Activated CD4-positive, alpha-beta memory T cell treated with anti-CD3 and anti-CD28 coated beads for 36 hours (primary cell): ENCODE measurements at regions of chrX and their contacts with region 1.

Region 1: DNA sequence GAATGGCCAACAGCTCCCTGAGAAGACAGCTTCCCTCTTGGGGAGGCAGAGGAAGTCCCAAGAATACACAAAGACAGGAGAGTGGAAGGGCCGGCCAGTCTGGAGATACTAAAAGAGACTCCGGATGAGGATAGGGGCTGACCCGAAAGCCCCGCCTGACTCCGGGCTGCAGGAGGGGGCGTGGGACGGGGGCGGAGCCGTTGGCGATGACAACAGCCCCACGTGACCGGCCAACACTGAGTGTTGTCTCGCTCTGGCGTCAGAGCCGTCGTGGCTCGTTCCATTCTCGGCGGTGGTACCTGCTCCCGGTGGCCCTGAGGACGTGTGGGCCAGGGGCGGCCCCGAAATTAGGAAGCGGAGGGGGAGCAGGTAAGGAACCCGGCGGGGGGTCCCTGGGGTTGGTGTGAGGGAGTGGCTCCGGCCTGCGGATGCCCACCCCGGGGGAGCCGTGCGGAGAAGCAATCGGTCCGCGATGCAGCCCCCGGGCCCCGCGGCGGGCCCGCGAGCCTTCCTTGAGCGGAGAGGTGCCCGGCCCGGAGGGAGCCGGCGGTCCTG is at the start of gene BEX4:
- DNase-seq: peak; percentile 89
- H3K4me3 Mint-ChIP-seq: peak within 1 kb of the TSS; percentile 77
- H3K27ac Mint-ChIP-seq: peak within 1 kb of the TSS; percentile 65
- H3K4me1 Mint-ChIP-seq: peaks cover 4% of the 10 kb centered on the region
- H3K27me3 Mint-ChIP-seq: no peaks in the 10 kb centered on the region
- total RNA-seq, gene BEX4: 8.0 to 11.5 TPM

Region 2: DNA sequence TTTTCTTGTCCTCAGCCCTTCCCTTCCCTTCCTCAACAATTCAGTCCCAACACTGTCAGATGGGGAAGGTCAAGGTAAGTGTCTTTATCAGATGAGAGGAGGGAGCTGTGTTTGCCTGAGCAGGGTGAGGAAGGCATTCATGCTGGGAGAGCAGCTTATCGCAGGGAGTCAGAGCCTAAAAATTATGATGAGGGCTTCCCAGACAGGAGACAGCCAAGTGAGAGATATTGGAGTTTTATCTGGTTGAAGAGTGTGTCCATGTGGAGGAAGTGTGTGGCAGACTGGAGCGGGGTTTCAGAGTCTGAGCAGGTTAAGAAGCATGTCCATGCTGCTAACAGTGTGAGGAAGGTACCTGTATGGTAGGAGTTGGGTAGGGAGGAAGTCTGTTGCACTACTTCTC is 18.3 kb after region 1 on chrX:
- CTCF ChIA-PET with region 1: interaction called, 10 read pairs
- POLR2A ChIA-PET with region 1: no interaction called
- intact Hi-C with region 1: no loop called
- DNase-seq: no peak
- H3K4me3 Mint-ChIP-seq: no peak overlapping the region
- H3K27ac Mint-ChIP-seq: no peak overlapping the region
- H3K4me1 Mint-ChIP-seq: no peaks in the 10 kb centered on the region
- H3K27me3 Mint-ChIP-seq: peaks cover 2% of the 10 kb centered on the region

Region 3: DNA sequence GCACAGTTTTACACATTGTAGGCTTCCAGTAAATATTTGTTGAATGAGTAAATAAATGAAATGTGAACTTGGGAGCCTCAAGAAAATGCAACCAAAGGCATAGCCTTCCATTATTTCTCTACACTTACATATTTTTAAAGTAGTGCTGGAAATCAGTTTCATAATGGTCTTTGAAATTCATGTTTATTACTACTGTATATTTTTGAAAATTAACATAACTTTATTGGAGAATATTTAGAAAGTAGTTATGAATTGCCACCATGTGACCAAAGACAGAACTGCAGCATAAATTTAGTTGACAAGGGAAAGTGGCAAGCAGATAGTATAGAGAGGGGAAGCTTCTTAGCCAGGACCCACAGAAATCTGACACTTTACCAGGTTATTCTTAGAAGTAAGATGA is 33.6 kb after region 1 on chrX:
- CTCF ChIA-PET with region 1: interaction called, 5 read pairs
- POLR2A ChIA-PET with region 1: no interaction called
- intact Hi-C with region 1: loop called (anchors 1 kb)
- DNase-seq: no peak
- H3K4me3 Mint-ChIP-seq: no peak overlapping the region
- H3K27ac Mint-ChIP-seq: no peak overlapping the region
- H3K4me1 Mint-ChIP-seq: peaks cover 4% of the 10 kb centered on the region
- H3K27me3 Mint-ChIP-seq: no peaks in the 10 kb centered on the region

Region 4: DNA sequence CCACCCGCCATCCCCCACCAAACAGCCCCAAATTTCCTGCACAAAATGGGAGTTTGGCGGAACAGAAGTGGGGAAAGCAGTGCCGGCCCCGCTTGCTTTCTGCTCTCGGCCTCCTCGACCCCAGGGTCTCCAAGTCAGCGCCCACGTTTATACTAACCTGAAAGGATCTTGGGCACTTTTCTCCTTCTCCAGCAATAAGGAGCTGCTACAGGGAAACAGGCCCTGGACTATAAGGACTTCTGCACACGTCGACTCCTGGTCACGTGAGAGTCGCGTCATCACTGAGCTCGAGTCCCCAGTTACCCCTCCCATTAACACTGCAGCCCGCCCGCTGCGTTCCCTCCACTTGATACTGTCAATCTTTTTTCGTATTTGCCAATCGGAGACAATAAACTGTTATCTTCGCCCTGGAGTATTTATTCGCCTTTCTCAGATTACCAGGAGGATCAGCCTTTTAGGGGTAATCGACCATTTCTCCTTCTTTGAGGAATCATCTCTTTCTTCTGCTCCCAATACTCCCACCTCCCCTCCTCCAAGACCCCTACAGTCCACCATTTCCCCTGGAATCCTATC is 40.1 kb after region 1 on chrX and contains the start of gene TCEAL8:
- CTCF ChIA-PET with region 1: interaction called, 5 read pairs
- POLR2A ChIA-PET with region 1: no interaction called
- intact Hi-C with region 1: loop called (anchors 1 kb)
- DNase-seq: peak; percentile 79
- H3K4me3 Mint-ChIP-seq: peak within 1 kb of the TSS; percentile 95
- H3K27ac Mint-ChIP-seq: peak within 1 kb of the TSS; percentile 96
- H3K4me1 Mint-ChIP-seq: peaks cover 20% of the 10 kb centered on the region
- H3K27me3 Mint-ChIP-seq: no peaks in the 10 kb centered on the region
- total RNA-seq, gene TCEAL8: 37.8 to 38.5 TPM

Region 5: DNA sequence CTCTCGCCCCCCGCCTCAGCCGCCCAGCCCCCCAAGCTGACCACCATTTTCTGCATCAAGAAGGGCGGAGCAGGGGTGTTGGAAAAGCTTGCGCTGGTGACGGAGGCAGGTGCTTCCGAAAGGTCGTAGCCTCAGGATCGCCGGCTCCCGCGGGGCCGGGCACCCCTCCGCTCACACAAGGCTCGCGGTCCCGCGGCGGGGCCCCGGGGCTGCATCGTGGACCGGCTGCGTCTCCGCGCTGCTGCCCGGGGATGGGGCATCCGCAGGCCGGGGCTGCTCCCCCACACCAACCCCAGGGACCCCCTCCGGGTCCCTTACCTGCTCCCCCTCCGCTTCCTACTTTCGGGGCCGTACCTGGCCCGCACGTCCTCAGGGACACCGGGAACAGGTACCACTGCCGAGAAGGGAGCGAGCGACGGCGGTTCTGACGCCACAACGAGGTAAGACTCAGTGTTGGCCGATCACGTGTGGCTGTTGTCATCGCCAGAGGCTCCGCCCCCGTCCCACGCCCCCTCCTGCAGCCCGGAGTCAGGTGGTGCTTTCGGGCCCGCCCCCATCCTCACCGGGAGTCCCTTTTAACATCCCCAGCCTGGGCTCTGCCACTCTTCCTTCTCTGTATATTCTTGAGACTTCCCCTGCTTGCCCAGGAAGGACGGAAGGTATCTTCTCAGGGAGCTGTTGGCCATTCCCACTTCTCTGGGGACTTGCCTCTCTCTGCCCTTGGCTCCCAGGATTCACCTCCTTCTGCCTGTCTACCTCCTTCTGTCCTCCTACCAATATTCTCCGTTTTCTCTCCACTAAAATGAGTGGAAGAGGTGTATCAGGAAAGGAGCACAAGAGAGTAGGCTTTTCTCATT is 95.8 kb after region 1 on chrX and contains the start of gene BEX2:
- CTCF ChIA-PET with region 1: no interaction called
- POLR2A ChIA-PET with region 1: interaction called, 3 read pairs
- intact Hi-C with region 1: loop called (anchors 10 kb)
- DNase-seq: peak; percentile 90
- H3K4me3 Mint-ChIP-seq: peak within 1 kb of the TSS; percentile 69
- H3K27ac Mint-ChIP-seq: no peak within 1 kb of the TSS
- H3K4me1 Mint-ChIP-seq: peaks cover 4% of the 10 kb centered on the region
- H3K27me3 Mint-ChIP-seq: no peaks in the 10 kb centered on the region
- total RNA-seq, gene BEX2: 11.3 to 12.1 TPM

Region 6: GRCh38 chrX:103464774-103465117 is 249.8 kb after region 1 on chrX:
- CTCF ChIA-PET with region 1: interaction called, 34 read pairs
- POLR2A ChIA-PET with region 1: no interaction called
- intact Hi-C with region 1: loop called (anchors 1 kb)
- DNase-seq: peak; percentile 83
- H3K4me3 Mint-ChIP-seq: peak overlapping the region; percentile 83
- H3K27ac Mint-ChIP-seq: peak overlapping the region; percentile 58
- H3K4me1 Mint-ChIP-seq: peaks cover 24% of the 10 kb centered on the region
- H3K27me3 Mint-ChIP-seq: no peaks in the 10 kb centered on the region